Ascending aorta (tissue), 2 donors: ENCODE measurements at regions of chr1 and their contacts with region 1.

Region 1: GRCh38 chr1:185156854-185157598 is at the starts of genes SWT1 and TRMT1L:
- DNase-seq: peak; percentile 99 to 100
- H3K4me3 ChIP-seq: peak within 1 kb of the TSS; percentile 81 to 87
- H3K27ac ChIP-seq: peak within 1 kb of the TSS; percentile 94 to 98
- H3K4me1 ChIP-seq: peaks cover 4 to 13% of the 10 kb centered on the region in 2 donors
- H3K27me3 ChIP-seq: no peaks in the 10 kb centered on the region
- CTCF ChIP-seq: no peak
- total RNA-seq, gene SWT1: 0.43 TPM
- total RNA-seq, gene TRMT1L: 0.96 TPM

Region 2: GRCh38 chr1:184386312-184387068 is 770.5 kb before region 1 on chr1 and contains the start of gene C1orf21:
- intact Hi-C with region 1: loop called (anchors 5 kb)
- DNase-seq: peak; percentile 54 to 93
- H3K4me3 ChIP-seq: peak within 1 kb of the TSS; percentile 87 to 98
- H3K27ac ChIP-seq: peak within 1 kb of the TSS; percentile 73 to 75
- H3K4me1 ChIP-seq: peaks cover 0 to 5% of the 10 kb centered on the region in 2 donors
- H3K27me3 ChIP-seq: no peaks in the 10 kb centered on the region
- CTCF ChIP-seq: no peak
- total RNA-seq, gene C1orf21: 21.8 TPM

Region 3: GRCh38 chr1:184754476-184755225 is 402.4 kb before region 1 on chr1 and contains the start of gene EDEM3:
- intact Hi-C with region 1: loop called (anchors 1 kb)
- DNase-seq: peak; percentile 98 to 99
- H3K4me3 ChIP-seq: peak within 1 kb of the TSS; percentile 76 to 90
- H3K27ac ChIP-seq: peak within 1 kb of the TSS; percentile 93 to 96
- H3K4me1 ChIP-seq: peaks cover 2 to 11% of the 10 kb centered on the region in 2 donors
- H3K27me3 ChIP-seq: no peaks in the 10 kb centered on the region
- CTCF ChIP-seq: no peak
- total RNA-seq, gene EDEM3: 23.1 TPM

Region 4: DNA sequence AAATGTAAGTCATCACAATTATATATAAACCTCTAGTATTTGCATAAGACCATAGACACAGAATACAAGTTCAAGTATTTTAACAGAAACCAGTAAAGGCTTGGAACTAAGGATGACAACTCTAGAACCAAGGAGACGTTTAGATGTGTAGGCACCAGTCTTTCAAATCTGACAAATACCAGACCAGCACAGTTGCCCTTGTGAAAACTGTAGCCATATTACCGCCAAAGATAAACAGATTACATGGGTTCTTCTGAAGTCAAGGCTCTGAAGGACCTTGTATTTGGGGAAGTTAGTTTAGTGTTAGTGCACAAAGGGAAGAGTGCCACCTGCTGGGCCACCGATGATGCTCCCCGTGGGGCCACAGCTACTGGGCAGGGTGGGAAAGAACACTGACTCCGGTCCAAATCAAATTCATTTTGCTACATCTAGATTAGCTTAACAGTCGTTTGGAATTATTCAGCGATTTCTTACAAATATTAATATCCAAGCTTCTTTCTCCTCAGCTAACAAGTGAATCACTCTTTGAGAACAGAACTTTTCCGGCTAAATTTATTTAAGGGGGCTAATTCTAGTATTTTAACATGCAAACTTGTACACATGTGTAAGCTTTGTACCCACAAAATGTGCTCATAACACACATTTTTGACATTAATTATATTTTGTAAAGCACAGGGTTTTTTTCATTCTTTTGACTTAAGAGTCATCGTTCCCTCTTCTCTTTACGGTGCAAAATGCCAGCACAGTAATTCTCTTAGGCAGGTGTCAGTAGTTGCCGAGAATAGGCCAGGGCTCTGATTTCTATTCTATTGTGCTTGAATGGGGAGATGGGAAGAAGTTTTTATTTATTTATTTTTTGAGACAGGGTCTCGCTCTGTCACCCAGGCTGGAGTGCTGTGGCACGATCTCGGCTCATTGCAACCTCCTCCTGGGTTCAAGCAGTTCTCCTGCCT is 174.7 kb before region 1 on chr1:
- intact Hi-C with region 1: loop called (anchors 10 kb)
- DNase-seq: peak in 1 of 2 donors; percentile 89
- H3K4me3 ChIP-seq: no peak overlapping the region
- H3K27ac ChIP-seq: no peak overlapping the region
- H3K4me1 ChIP-seq: no peaks in the 10 kb centered on the region
- H3K27me3 ChIP-seq: no peaks in the 10 kb centered on the region
- CTCF ChIP-seq: peak; percentile 78 to 94 (median 92)

Region 5: GRCh38 chr1:185044981-185045813 is 111.8 kb before region 1 on chr1 and contains the start of gene RNF2:
- intact Hi-C with region 1: loop called (anchors 2 kb)
- DNase-seq: peak; percentile 41 to 88
- H3K4me3 ChIP-seq: peak within 1 kb of the TSS; percentile 73 to 87
- H3K27ac ChIP-seq: peak within 1 kb of the TSS; percentile 82 to 88
- H3K4me1 ChIP-seq: peaks cover 0 to 18% of the 10 kb centered on the region in 2 donors
- H3K27me3 ChIP-seq: no peaks in the 10 kb centered on the region
- CTCF ChIP-seq: no peak
- total RNA-seq, gene RNF2: 4.0 TPM

Region 6: DNA sequence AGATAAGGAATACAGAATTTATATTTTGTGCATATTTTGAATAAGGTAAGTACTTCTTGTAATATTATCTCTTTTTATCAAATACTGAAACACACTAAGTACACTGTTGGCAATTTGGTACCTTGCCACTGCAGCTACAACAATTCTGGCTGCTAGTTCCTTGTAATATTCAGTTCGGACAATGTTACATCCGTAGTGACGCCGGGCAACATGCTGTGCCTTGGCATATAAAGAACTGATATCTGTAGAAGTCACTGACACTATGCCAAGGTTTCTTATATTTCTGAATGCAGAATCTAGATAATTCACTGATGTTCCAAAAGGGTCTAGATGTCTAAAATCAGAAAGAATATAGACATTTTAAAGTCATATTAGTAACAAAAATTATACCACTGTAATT is 17.8 kb before region 1 on chr1:
- intact Hi-C with region 1: no loop called
- DNase-seq: no peak
- H3K4me3 ChIP-seq: no peak overlapping the region
- H3K27ac ChIP-seq: no peak overlapping the region
- H3K4me1 ChIP-seq: no peaks in the 10 kb centered on the region
- H3K27me3 ChIP-seq: no peaks in the 10 kb centered on the region
- CTCF ChIP-seq: no peak

Region 7: GRCh38 chr1:185317034-185317885 is 160.2 kb after region 1 on chr1 and contains the start of gene IVNS1ABP:
- intact Hi-C with region 1: loop called (anchors 1 kb)
- DNase-seq: peak; percentile 86 to 97
- H3K4me3 ChIP-seq: peak within 1 kb of the TSS; percentile 87 to 98
- H3K27ac ChIP-seq: peak within 1 kb of the TSS; percentile 96 to 98
- H3K4me1 ChIP-seq: peaks cover 0 to 17% of the 10 kb centered on the region in 2 donors
- H3K27me3 ChIP-seq: no peaks in the 10 kb centered on the region
- CTCF ChIP-seq: peak in 2 of 3 experiments; percentile 12 to 35
- total RNA-seq, gene IVNS1ABP: 61.0 TPM

Region 8: DNA sequence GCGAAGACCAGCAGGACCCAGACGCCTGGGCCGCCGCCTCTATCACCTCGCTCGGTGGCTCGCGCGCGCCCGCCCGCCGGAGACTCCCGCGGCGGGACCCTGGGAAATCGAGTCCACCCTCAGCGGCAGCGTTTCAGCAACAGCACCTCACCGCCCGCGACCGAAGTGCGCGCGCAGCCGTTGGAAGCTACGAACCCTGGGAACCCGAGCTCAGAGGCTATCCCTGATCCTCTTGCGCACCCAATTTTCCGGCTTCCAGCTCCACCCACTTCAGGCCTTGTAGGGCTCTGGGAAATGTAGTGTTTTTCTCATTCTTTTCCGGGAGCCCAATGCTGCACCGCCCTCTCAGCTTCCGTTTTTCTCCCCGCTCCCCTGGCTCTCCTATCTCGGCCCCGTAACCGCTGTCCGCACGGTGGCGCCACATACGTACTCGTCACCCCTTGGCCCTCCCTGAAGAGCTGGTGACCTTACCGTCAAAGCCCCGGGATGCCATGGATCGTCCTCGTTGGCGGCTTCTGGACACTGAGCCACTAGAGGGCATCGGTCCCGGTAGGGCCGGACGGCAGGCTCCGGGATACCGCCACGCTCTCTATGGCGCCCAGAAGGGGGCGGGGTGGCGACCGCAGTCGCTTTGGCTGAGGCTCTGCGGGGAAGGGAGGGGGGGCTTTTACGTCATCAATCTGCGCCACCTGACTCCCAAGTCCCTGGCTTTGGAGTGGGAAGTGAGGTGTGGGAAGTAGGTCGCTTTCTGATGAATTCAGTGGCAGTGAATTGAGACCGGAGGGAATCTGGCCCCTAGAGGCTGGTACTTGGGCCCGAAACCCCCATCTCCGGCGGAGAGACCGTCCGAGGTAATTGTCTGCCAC is 1218.3 kb after region 1 on chr1 and contains the starts of genes ODR4 and TPR:
- intact Hi-C with region 1: loop called (anchors 1 kb)
- DNase-seq: peak; percentile 94 to 99
- H3K4me3 ChIP-seq: peak within 1 kb of the TSS; percentile 74 to 94
- H3K27ac ChIP-seq: peak within 1 kb of the TSS; percentile 98 to 99
- H3K4me1 ChIP-seq: peaks cover 6 to 16% of the 10 kb centered on the region in 2 donors
- H3K27me3 ChIP-seq: no peaks in the 10 kb centered on the region
- CTCF ChIP-seq: peak; percentile 90 to 92 (median 91)
- total RNA-seq, gene ODR4: 5.5 TPM
- total RNA-seq, gene TPR: 35.7 TPM